ENCODE measurements at regions of chr3 and their contacts with region 1.

Region 1: GRCh38 chr3:138378990-138379389 is 30.6 kb downstream of the MRAS start:
- DNase-seq: no peak
- H3K4me3 ChIP-seq: no peak overlapping the region
- H3K27ac ChIP-seq: no peak overlapping the region
- H3K4me1 ChIP-seq: no peaks in the 10 kb centered on the region
- H3K27me3 ChIP-seq: no peaks in the 10 kb centered on the region
- CTCF ChIP-seq: no peak

Region 2: GRCh38 chr3:138263104-138263503 is 115.9 kb before region 1 on chr3:
- CTCF ChIA-PET with region 1: interaction called, 10 read pairs
- POLR2A ChIA-PET with region 1: no interaction called
- intact Hi-C with region 1: no loop called
- DNase-seq: no peak
- H3K4me3 ChIP-seq: no peak overlapping the region
- H3K27ac ChIP-seq: no peak overlapping the region
- H3K4me1 ChIP-seq: no peaks in the 10 kb centered on the region
- H3K27me3 ChIP-seq: no peaks in the 10 kb centered on the region
- CTCF ChIP-seq: no peak

Measured in PC-9 (cell line).